Right cardiac atrium (tissue), 5 donors: ENCODE measurements at regions of chr11 and their contacts with region 1.

Region 1: GRCh38 chr11:132658696-132659095 is 873.6 kb downstream of the OPCML start:
- DNase-seq: no peak
- ATAC-seq: no peak
- H3K4me3 ChIP-seq: no peak overlapping the region
- H3K27ac ChIP-seq: no peak overlapping the region
- H3K4me1 ChIP-seq: no peaks in the 10 kb centered on the region
- H3K27me3 ChIP-seq: no peaks in the 10 kb centered on the region

Region 2: GRCh38 chr11:132620423-132620822 is 38.3 kb before region 1 on chr11:
- intact Hi-C with region 1: loop called in 1 of 4 experiments (anchors 2 kb)
- DNase-seq: no peak
- ATAC-seq: no peak
- H3K4me3 ChIP-seq: no peak overlapping the region
- H3K27ac ChIP-seq: no peak overlapping the region
- H3K4me1 ChIP-seq: no peaks in the 10 kb centered on the region
- H3K27me3 ChIP-seq: no peaks in the 10 kb centered on the region